BJ (cell line): ENCODE measurements at regions of chr10 and their contacts with region 1.

Region 1: DNA sequence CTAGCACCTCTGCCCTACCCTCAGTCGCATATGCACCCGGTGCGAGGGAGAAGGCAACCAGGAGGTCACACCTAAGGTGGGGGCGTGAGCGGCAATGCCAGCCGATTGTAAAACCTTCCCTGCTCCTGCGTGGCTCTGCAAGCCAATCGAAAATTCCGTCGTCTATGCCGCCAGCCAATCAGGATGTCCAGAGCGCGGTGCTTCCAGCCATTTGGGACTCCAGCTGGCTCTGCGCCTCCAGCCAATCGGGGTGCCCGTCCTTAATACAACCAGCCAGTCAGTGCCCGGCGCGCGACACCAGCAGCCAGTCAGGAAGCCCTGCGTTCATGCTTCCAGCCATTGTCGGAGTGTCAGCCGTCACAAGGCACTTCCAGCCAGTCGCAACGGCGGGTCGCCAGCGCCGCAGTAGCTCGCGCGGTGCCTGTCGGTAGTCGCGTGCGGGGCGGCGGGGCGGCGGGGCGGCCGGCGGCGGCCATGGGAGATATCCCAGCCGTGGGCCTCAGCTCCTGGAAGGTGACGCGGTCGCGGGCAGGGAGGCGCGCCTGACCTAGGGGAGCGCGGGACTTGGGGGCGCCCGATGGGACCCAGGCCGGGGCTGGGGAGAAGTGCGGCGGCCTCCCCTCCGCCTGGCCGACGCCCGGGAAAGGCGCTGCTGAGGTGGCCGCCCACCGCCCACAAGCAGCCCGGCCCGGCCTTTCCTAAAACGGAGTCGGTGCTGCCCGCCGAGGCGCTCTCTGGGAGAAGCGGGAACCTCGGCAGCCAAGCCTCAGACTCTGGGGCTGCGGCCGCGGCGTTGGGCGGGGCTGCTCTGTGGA is at the start of gene AKR1E2:
- DNase-seq: peak; percentile 71
- H3K4me3 ChIP-seq: peak within 1 kb of the TSS; percentile 60
- H3K27me3 ChIP-seq: no peaks in the 10 kb centered on the region
- CTCF ChIP-seq: no peak
- polyA plus RNA-seq, gene AKR1E2: 2.5 and 3.3 TPM in 2 replicates

Region 2: DNA sequence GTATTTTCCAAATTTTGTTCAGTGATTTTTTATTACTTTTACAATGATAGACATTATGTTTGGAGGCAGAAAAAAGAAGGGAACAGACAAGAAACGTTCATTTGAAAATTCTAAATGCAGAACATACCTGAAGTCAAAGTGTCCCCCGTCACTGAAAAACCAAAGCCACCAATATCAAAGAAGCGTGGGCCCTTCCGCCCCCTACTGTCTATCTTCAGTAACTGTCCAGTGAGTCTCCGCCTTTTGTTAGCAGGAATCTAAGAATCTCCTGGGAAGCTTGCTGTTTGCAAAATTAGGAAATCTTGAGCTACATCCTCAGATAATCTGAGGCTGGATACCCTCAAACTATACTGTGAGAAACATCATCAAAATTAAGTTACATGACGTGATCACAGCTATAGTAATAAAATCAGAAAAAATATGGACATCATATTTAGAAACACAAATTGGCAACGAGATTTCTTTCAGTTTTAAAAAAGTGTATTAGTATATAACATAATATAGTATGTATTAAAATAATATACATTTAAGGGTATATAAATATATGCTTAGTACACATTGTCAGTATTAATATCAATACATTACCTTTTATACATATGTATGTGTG is 169.4 kb before region 1 on chr10:
- CTCF ChIA-PET with region 1: no interaction called
- POLR2A ChIA-PET with region 1: no interaction called
- DNase-seq: no peak
- H3K4me3 ChIP-seq: no peak overlapping the region
- H3K27me3 ChIP-seq: no peaks in the 10 kb centered on the region
- CTCF ChIP-seq: peak; percentile 90

Region 3: DNA sequence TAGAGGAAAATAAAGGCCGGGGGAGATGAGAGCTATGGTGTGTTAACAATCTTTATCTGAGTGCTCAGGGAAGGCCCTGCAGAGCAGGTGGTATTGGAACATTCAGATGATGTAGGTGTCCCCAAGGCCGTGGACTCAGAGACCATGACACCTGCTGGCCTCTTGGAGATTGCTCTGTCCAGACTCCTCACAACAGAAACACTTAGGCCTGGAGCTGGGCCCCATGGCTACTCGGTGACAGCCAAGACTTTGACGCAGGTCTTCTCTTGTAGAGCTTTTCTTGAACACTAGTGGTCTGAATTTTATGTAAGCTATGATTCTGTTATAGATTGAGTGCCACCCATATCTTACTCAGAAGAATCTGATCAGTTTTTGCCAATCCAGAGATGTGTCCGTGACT is 13.3 kb after region 1 on chr10:
- CTCF ChIA-PET with region 1: interaction called, 16 read pairs
- POLR2A ChIA-PET with region 1: no interaction called
- DNase-seq: no peak
- H3K4me3 ChIP-seq: no peak overlapping the region
- H3K27me3 ChIP-seq: no peaks in the 10 kb centered on the region
- CTCF ChIP-seq: no peak